Colonic mucosa (tissue), 4 donors: ENCODE measurements at regions of chr12 and their contacts with region 1.

Region 1: GRCh38 chr12:121678716-121679580 is 9.5 kb upstream of the MORN3 start:
- DNase-seq: no peak
- H3K4me3 ChIP-seq: no peak overlapping the region
- H3K27ac ChIP-seq: no peak overlapping the region
- H3K4me1 ChIP-seq: no peaks in the 10 kb centered on the region
- H3K27me3 ChIP-seq: no peaks in the 10 kb centered on the region
- CTCF ChIP-seq: no peak

Region 2: GRCh38 chr12:121494093-121494787 is 184.7 kb before region 1 on chr12:
- intact Hi-C with region 1: loop called (anchors 5 kb)
- DNase-seq: peak; percentile 43
- H3K4me3 ChIP-seq: no peak overlapping the region
- H3K27ac ChIP-seq: no peak overlapping the region
- H3K4me1 ChIP-seq: no peaks in the 10 kb centered on the region
- H3K27me3 ChIP-seq: no peaks in the 10 kb centered on the region
- CTCF ChIP-seq: peak; percentile 70

Region 3: GRCh38 chr12:121550974-121551634 is 127.8 kb before region 1 on chr12:
- intact Hi-C with region 1: loop called (anchors 2 kb)
- DNase-seq: no peak
- H3K4me3 ChIP-seq: no peak overlapping the region
- H3K27ac ChIP-seq: no peak overlapping the region
- H3K4me1 ChIP-seq: no peaks in the 10 kb centered on the region
- H3K27me3 ChIP-seq: no peaks in the 10 kb centered on the region
- CTCF ChIP-seq: no peak

Region 4: GRCh38 chr12:121560392-121561008 is 118.4 kb before region 1 on chr12:
- intact Hi-C with region 1: loop called (anchors 2 kb)
- DNase-seq: no peak
- H3K4me3 ChIP-seq: no peak overlapping the region
- H3K27ac ChIP-seq: no peak overlapping the region
- H3K4me1 ChIP-seq: peaks cover 3% of the 10 kb centered on the region
- H3K27me3 ChIP-seq: no peaks in the 10 kb centered on the region
- CTCF ChIP-seq: no peak

Region 5: DNA sequence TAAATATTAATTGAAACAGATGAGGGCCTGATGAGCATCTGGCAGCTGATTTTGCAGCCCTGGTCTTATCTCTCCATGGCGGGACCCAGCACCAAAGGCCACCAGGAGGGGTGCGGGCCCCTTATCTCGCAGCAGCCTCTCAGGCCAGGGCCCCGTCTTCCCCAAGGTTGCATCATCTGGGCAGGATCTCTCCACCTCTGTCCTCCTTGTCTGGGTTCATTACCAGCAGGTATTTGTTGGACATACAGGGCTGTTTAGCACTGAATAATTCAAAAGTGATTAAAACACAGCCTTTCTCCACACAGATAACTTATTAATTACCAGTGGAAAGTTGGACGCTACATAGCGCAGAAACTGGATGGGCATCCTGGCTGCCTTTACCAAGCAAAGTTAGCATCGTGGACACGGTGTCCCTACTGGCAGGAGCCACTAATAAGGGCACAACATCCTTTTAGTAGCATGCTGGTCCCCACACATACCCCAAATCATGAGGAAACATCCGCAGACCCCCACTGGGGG is 59.5 kb after region 1 on chr12:
- intact Hi-C with region 1: no loop called
- DNase-seq: no peak
- H3K4me3 ChIP-seq: no peak overlapping the region
- H3K27ac ChIP-seq: no peak overlapping the region
- H3K4me1 ChIP-seq: no peaks in the 10 kb centered on the region
- H3K27me3 ChIP-seq: no peaks in the 10 kb centered on the region
- CTCF ChIP-seq: no peak

Region 6: GRCh38 chr12:123379386-123379785 is 1700.4 kb after region 1 on chr12:
- intact Hi-C with region 1: no loop called
- DNase-seq: no peak
- H3K4me3 ChIP-seq: no peak overlapping the region
- H3K27ac ChIP-seq: no peak overlapping the region
- H3K4me1 ChIP-seq: no peaks in the 10 kb centered on the region
- H3K27me3 ChIP-seq: no peaks in the 10 kb centered on the region
- CTCF ChIP-seq: no peak